CD8-positive, alpha-beta T cell (primary cell): ENCODE measurements at regions of chr1 and their contacts with region 1.

Region 1: DNA sequence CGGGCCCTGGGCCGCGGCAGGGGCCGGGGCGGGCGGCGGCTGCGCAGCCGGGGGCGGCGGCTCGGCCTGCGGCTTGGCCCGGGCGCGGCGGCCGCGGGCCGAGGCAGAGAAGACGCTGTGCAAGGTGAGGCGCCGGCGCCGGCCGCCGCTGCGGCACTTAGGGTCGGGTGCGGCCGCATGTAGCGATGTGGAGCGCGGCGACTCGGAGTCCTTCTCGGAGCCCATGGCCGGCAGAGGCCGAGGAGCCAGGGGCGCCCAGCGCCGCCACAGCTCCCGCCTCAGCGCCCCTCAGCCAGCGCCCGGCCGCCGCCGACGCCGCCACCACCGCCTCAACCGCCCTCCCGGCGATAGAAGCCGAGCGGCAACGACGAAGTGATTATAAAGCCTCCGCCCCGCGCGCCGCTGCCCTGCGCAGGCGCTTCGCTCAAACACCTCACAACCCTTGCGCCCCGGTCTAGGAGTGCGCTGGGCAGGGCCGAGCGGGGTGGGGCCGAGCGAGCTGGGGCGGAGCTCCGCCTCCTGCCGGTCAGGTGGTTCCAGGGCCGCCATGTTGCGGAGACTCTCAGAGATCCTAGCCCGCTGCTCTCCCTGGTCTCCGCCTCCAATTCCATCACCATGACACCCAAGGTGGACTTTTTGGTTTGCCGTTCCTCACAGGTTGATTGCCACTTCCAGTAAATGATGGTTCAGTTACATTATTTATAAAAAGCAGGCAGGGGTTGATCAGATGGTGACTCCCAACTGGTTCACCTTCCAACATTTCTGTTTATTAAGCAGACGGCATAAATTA is at the start of gene RNF19B:
- DNase-seq: peak; percentile 89 to 97 (median 93)
- ATAC-seq: peak; percentile 93
- H3K4me3 ChIP-seq: peak within 1 kb of the TSS; percentile 68 to 70
- H3K4me3 Mint-ChIP-seq: peak within 1 kb of the TSS; percentile 88
- H3K27ac ChIP-seq: peak within 1 kb of the TSS; percentile 51 to 75
- H3K27ac Mint-ChIP-seq: peak within 1 kb of the TSS; percentile 91
- H3K4me1 ChIP-seq: peaks cover 24% of the 10 kb centered on the region
- H3K4me1 Mint-ChIP-seq: peaks cover 38% of the 10 kb centered on the region
- H3K27me3 ChIP-seq: peaks cover 0 to 3% of the 10 kb centered on the region in 2 experiments
- H3K27me3 Mint-ChIP-seq: no peaks in the 10 kb centered on the region
- CTCF ChIP-seq: no peak
- total RNA-seq, gene RNF19B: 43.9 to 44.6 TPM

Region 2: DNA sequence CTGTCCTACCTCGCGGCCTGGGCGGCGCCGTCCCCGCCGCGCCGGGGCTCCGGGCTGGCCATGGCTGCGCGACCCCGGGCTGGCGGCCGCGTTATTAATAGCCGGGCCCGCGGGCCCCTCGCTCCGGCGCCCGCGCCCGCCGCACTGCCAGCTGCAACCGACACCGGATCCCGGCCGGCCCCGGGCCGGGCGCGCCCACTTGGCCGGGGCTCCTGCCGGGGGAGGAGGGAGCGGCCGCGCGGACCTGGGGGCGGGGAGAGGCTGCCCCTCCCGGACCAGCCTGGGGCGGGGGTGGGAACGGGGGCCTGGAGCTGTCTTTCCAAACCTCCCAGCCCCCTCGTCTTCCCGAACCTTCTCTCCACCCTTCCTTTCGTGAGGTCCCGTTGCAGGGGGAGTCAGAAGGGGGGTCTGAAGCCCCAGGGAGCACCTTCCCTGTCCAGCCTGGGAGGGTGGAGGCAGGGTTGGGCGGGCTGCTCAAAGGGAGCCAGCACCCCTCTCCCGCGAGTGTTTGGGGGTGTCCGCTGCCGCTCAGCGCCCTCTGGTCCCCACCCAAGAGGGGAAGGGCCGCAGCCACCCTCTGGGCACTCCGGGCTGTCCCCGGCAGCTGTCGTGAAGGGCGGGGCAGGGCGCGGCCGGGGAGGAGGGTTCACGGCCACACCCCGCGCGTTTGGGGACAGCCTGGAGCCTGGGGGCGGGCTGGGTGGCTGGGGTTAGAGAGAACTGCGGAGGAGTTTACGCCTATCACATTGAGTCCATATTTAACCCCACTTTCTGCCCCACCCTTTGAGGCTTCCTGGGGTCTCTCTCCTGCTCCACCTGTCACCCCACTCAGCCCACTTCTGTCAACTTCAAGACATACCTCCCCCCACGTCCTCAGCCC is 261.8 kb before region 1 on chr1 and contains the start of gene SYNC:
- CTCF ChIA-PET with region 1: no interaction called
- POLR2A ChIA-PET with region 1: no interaction called
- intact Hi-C with region 1: no loop called
- DNase-seq: peak in 2 of 9 experiments; percentile 17 to 22
- ATAC-seq: peak; percentile 57
- H3K4me3 ChIP-seq: peak within 1 kb of the TSS in 1 of 2 experiments; percentile 28
- H3K4me3 Mint-ChIP-seq: peak within 1 kb of the TSS; percentile 67
- H3K27ac ChIP-seq: no peak within 1 kb of the TSS
- H3K27ac Mint-ChIP-seq: no peak within 1 kb of the TSS
- H3K4me1 ChIP-seq: peaks cover 10% of the 10 kb centered on the region
- H3K4me1 Mint-ChIP-seq: peaks cover 12% of the 10 kb centered on the region
- H3K27me3 ChIP-seq: peaks cover 19 to 21% of the 10 kb centered on the region in 2 experiments
- H3K27me3 Mint-ChIP-seq: peaks cover 37% of the 10 kb centered on the region
- CTCF ChIP-seq: no peak
- total RNA-seq, gene SYNC: not detected

Region 3: GRCh38 chr1:32953495-32953894 is 11.2 kb before region 1 on chr1:
- CTCF ChIA-PET with region 1: interaction called, 4 read pairs
- POLR2A ChIA-PET with region 1: interaction called, 10 read pairs
- intact Hi-C with region 1: no loop called
- DNase-seq: no peak
- ATAC-seq: no peak
- H3K4me3 ChIP-seq: no peak overlapping the region
- H3K4me3 Mint-ChIP-seq: no peak overlapping the region
- H3K27ac ChIP-seq: no peak overlapping the region
- H3K27ac Mint-ChIP-seq: no peak overlapping the region
- H3K4me1 ChIP-seq: peaks cover 7% of the 10 kb centered on the region
- H3K4me1 Mint-ChIP-seq: peaks cover 41% of the 10 kb centered on the region
- H3K27me3 ChIP-seq: no peaks in the 10 kb centered on the region
- H3K27me3 Mint-ChIP-seq: no peaks in the 10 kb centered on the region
- CTCF ChIP-seq: no peak

Region 4: DNA sequence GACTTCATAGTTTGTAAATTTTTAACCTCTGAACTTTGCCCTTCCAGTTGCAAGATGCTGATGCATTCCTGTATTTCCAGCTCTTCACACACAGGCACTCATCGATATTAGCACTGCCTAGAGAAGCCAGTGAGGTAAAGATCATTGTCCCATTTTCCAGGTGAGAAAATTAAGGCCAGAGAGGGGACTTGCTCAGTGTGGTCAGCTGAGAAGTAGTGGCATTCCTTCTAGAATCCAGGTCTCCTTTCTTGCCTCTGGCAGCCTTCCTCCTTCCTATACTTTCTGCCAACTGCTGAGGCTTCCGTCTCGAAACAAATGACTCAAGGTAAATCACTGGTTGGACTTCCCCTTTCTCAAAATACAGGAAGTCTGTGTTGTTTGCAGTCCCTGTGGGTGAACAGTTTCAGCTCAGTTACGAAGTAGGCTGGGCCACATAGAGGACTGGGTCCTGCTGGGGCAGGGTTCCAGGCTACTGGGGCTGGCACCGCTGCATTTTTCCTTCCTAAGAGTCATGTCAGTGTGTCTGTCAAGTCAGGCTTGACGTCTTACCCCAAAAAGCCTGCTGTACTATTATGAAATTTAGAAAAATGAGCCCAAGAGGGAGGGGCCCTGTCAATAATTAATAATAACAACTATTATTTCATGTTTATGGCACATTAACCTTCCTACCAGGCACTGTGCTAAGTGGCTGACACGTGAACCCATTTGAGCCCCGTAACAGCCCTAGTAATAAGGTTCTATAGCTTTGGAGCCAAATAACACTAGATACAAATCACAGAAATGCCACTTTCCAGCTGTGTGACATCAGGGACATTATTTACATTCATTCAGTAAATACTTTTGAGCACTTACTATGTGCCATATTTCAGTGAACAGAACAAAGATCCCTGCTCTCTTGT is 16.6 kb after region 1 on chr1:
- CTCF ChIA-PET with region 1: interaction called, 4 read pairs
- POLR2A ChIA-PET with region 1: interaction called, 58 read pairs
- intact Hi-C with region 1: loop called (anchors 1 kb)
- DNase-seq: peak; percentile 23 to 90 (median 64)
- ATAC-seq: peak; percentile 98
- H3K4me3 ChIP-seq: peak overlapping the region; percentile 40
- H3K4me3 Mint-ChIP-seq: peak overlapping the region; percentile 68
- H3K27ac ChIP-seq: peak overlapping the region; percentile 49 to 94
- H3K27ac Mint-ChIP-seq: peak overlapping the region; percentile 90
- H3K4me1 ChIP-seq: peaks cover 18% of the 10 kb centered on the region
- H3K4me1 Mint-ChIP-seq: peaks cover 29% of the 10 kb centered on the region
- H3K27me3 ChIP-seq: no peaks in the 10 kb centered on the region
- H3K27me3 Mint-ChIP-seq: no peaks in the 10 kb centered on the region
- CTCF ChIP-seq: no peak

Region 5: GRCh38 chr1:33080885-33081553 is 116.4 kb after region 1 on chr1 and contains the start of gene AZIN2:
- CTCF ChIA-PET with region 1: no interaction called
- POLR2A ChIA-PET with region 1: interaction called, 4 read pairs
- intact Hi-C with region 1: loop called (anchors 1 to 2 kb)
- DNase-seq: peak; percentile 92 to 100 (median 97)
- ATAC-seq: peak; percentile 99
- H3K4me3 ChIP-seq: peak within 1 kb of the TSS; percentile 57 to 89
- H3K4me3 Mint-ChIP-seq: peak within 1 kb of the TSS; percentile 82
- H3K27ac ChIP-seq: peak within 1 kb of the TSS; percentile 28 to 54
- H3K27ac Mint-ChIP-seq: peak within 1 kb of the TSS; percentile 82
- H3K4me1 ChIP-seq: peaks cover 22% of the 10 kb centered on the region
- H3K4me1 Mint-ChIP-seq: peaks cover 29% of the 10 kb centered on the region
- H3K27me3 ChIP-seq: peaks cover 0 to 2% of the 10 kb centered on the region in 2 experiments
- H3K27me3 Mint-ChIP-seq: no peaks in the 10 kb centered on the region
- CTCF ChIP-seq: no peak
- total RNA-seq, gene AZIN2: 3.5 to 4.1 TPM

Region 6: GRCh38 chr1:33256701-33257399 is 292.2 kb after region 1 on chr1:
- CTCF ChIA-PET with region 1: no interaction called
- POLR2A ChIA-PET with region 1: no interaction called
- intact Hi-C with region 1: loop called in 1 of 2 experiments (anchors 10 kb)
- DNase-seq: peak; percentile 13 to 73 (median 55)
- ATAC-seq: peak; percentile 65
- H3K4me3 ChIP-seq: peak overlapping the region; percentile 62 to 75
- H3K4me3 Mint-ChIP-seq: peak overlapping the region; percentile 99
- H3K27ac ChIP-seq: peak overlapping the region; percentile 48 to 51
- H3K27ac Mint-ChIP-seq: peak overlapping the region; percentile 97
- H3K4me1 ChIP-seq: peaks cover 42% of the 10 kb centered on the region
- H3K4me1 Mint-ChIP-seq: peaks cover 47% of the 10 kb centered on the region
- H3K27me3 ChIP-seq: no peaks in the 10 kb centered on the region
- H3K27me3 Mint-ChIP-seq: no peaks in the 10 kb centered on the region
- CTCF ChIP-seq: no peak